OCI-LY7 (cell line): ENCODE measurements at regions of chr9 and their contacts with region 1.

Region 1: GRCh38 chr9:121731919-121732318 is 80.5 kb downstream of the DAB2IP start:
- DNase-seq: no peak
- H3K4me3 ChIP-seq: no peak overlapping the region
- H3K27ac ChIP-seq: no peak overlapping the region
- H3K4me1 ChIP-seq: peaks cover 50% of the 10 kb centered on the region
- CTCF ChIP-seq: no peak

Region 2: GRCh38 chr9:121707477-121708424 is 24.2 kb before region 1 on chr9:
- CTCF ChIA-PET with region 1: interaction called, 3 read pairs
- POLR2A ChIA-PET with region 1: interaction called, 3 read pairs
- intact Hi-C with region 1: loop called (anchors 1 kb)
- DNase-seq: peak; percentile 90
- H3K4me3 ChIP-seq: peak overlapping the region; percentile 21
- H3K27ac ChIP-seq: peak overlapping the region; percentile 80
- H3K4me1 ChIP-seq: peaks cover 63% of the 10 kb centered on the region
- CTCF ChIP-seq: no peak